Heart left ventricle (tissue), 16 donors: ENCODE measurements at regions of chr16 and their contacts with region 1.

Region 1: GRCh38 chr16:35440875-35441274 is 1981.5 kb downstream of the TP53TG3F start:
- DNase-seq: no peak
- ATAC-seq: no peak
- H3K4me3 ChIP-seq: no peak overlapping the region
- H3K27ac ChIP-seq: no peak overlapping the region
- H3K4me1 ChIP-seq: no peaks in the 10 kb centered on the region
- H3K27me3 ChIP-seq: no peaks in the 10 kb centered on the region
- CTCF ChIP-seq: no peak
- POLR2A ChIP-seq: no peak

Region 2: DNA sequence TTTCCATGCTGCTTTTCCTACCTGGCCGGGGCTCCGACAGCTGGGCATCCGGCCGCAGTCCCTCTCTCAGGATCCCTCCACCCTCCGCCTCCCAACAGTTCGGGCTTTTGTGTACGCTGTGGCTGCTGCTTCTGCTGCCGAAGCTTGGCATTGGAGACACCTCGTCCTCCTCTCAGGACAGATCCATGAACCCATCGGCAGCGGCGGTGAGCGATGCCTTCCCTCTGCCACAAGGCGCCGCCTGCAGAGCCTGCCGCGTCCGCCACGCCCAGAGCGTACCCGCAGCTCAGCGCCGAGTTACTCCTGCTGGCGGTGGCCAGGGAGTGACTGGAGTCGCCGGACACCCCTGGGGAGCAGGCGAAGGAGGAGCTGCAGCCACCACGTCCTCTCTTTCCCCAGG is 51.4 kb after region 1 on chr16:
- intact Hi-C with region 1: loop called in 1 of 10 experiments (anchors 5 kb)
- DNase-seq: no peak
- ATAC-seq: no peak
- H3K4me3 ChIP-seq: no peak overlapping the region
- H3K27ac ChIP-seq: no peak overlapping the region
- H3K4me1 ChIP-seq: no peaks in the 10 kb centered on the region
- H3K27me3 ChIP-seq: peaks cover 0 to 5% (median 0%) of the 10 kb centered on the region in 9 donors
- CTCF ChIP-seq: no peak
- POLR2A ChIP-seq: no peak

Region 3: GRCh38 chr16:35565626-35566025 is 124.8 kb after region 1 on chr16:
- intact Hi-C with region 1: no loop called
- DNase-seq: no peak
- ATAC-seq: no peak
- H3K4me3 ChIP-seq: no peak overlapping the region
- H3K27ac ChIP-seq: no peak overlapping the region
- H3K4me1 ChIP-seq: no peaks in the 10 kb centered on the region
- H3K27me3 ChIP-seq: no peaks in the 10 kb centered on the region
- CTCF ChIP-seq: no peak
- POLR2A ChIP-seq: no peak